ENCODE measurements at regions of chr21 and their contacts with region 1.

Region 1: DNA sequence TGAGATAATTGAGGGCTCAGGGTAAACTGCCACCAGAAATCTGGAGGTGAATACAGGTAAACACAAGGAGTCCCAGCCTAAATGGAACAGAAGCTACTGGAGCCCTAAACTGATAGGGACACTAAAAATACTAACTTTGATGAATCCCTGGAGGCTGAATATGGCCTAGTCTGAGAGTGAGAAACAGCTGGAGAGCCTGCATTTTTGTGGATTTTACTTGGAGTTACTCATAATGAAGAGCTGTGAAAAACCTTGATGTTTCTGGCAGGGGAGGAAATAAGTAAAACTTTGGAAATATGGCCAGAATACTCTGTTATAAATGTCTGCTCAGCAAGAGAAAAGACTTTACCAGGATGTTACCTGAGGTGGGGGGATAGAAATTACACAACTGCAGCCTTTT is 164.4 kb downstream of the LIPI start:
- DNase-seq: no peak
- ATAC-seq: no peak
- H3K4me3 Mint-ChIP-seq: no peak overlapping the region
- H3K27ac Mint-ChIP-seq: no peak overlapping the region
- H3K4me1 Mint-ChIP-seq: peaks cover 4% of the 10 kb centered on the region
- H3K27me3 Mint-ChIP-seq: no peaks in the 10 kb centered on the region
- CTCF ChIP-seq: no peak

Region 2: GRCh38 chr21:14099570-14099969 is 53.2 kb after region 1 on chr21:
- CTCF ChIA-PET with region 1: no interaction called
- POLR2A ChIA-PET with region 1: no interaction called
- intact Hi-C with region 1: loop called (anchors 5 kb)
- DNase-seq: no peak
- ATAC-seq: no peak
- H3K4me3 Mint-ChIP-seq: no peak overlapping the region
- H3K27ac Mint-ChIP-seq: no peak overlapping the region
- H3K4me1 Mint-ChIP-seq: no peaks in the 10 kb centered on the region
- H3K27me3 Mint-ChIP-seq: no peaks in the 10 kb centered on the region
- CTCF ChIP-seq: no peak

Region 3: GRCh38 chr21:14206222-14206621 is 159.8 kb after region 1 on chr21:
- CTCF ChIA-PET with region 1: no interaction called
- POLR2A ChIA-PET with region 1: no interaction called
- intact Hi-C with region 1: no loop called
- DNase-seq: no peak
- ATAC-seq: no peak
- H3K4me3 Mint-ChIP-seq: no peak overlapping the region
- H3K27ac Mint-ChIP-seq: no peak overlapping the region
- H3K4me1 Mint-ChIP-seq: no peaks in the 10 kb centered on the region
- H3K27me3 Mint-ChIP-seq: peaks cover 3% of the 10 kb centered on the region
- CTCF ChIP-seq: no peak

Region 4: DNA sequence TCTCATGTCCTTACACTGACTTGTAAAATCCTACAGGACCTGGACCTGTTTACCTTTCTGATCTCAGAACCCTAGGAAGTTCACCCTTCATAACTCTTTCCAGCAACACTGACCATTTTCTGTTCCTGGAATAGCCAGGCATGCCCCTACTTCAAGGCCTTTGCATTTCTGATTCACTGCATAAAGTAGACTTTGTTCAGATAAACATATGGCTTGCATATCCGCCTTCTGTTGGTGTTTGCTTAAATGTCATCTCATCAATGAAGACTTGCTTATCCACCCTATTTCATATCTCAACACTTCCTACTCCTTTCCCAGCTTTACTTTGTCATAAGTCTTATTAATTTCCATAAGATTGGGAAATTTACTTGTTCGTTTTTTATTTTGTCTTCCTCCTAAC is 279.2 kb after region 1 on chr21:
- CTCF ChIA-PET with region 1: no interaction called
- POLR2A ChIA-PET with region 1: no interaction called
- intact Hi-C with region 1: no loop called
- DNase-seq: no peak
- ATAC-seq: no peak
- H3K4me3 Mint-ChIP-seq: no peak overlapping the region
- H3K27ac Mint-ChIP-seq: no peak overlapping the region
- H3K4me1 Mint-ChIP-seq: no peaks in the 10 kb centered on the region
- H3K27me3 Mint-ChIP-seq: peaks cover 16% of the 10 kb centered on the region
- CTCF ChIP-seq: no peak